Naive thymus-derived CD4-positive, alpha-beta T cell (primary cell): ENCODE measurements at regions of chr15 and their contacts with region 1.

Region 1: GRCh38 chr15:50119063-50120040 is at the start of gene ATP8B4:
- DNase-seq: no peak
- ATAC-seq: no peak
- H3K4me3 ChIP-seq: no peak within 1 kb of the TSS
- H3K4me3 Mint-ChIP-seq: peak within 1 kb of the TSS in 2 of 10 donors; percentile 73 to 82
- H3K27ac ChIP-seq: no peak within 1 kb of the TSS
- H3K27ac Mint-ChIP-seq: peak within 1 kb of the TSS in 1 of 9 donors; percentile 82
- H3K4me1 ChIP-seq: no peaks in the 10 kb centered on the region
- H3K4me1 Mint-ChIP-seq: peaks cover 0 to 36% (median 7%) of the 10 kb centered on the region in 7 donors
- H3K27me3 ChIP-seq: no peaks in the 10 kb centered on the region
- H3K27me3 Mint-ChIP-seq: peaks cover 0 to 17% (median 14%) of the 10 kb centered on the region in 5 donors
- total RNA-seq, gene ATP8B4: 0.92 to 24.3 (median 5.0) TPM

Region 2: GRCh38 chr15:49558924-49559323 is 560.4 kb before region 1 on chr15:
- CTCF ChIA-PET with region 1: no interaction called
- POLR2A ChIA-PET with region 1: no interaction called
- intact Hi-C with region 1: no loop called
- DNase-seq: no peak
- ATAC-seq: no peak
- H3K4me3 ChIP-seq: no peak overlapping the region
- H3K4me3 Mint-ChIP-seq: no peak overlapping the region
- H3K27ac ChIP-seq: no peak overlapping the region
- H3K27ac Mint-ChIP-seq: no peak overlapping the region
- H3K4me1 ChIP-seq: no peaks in the 10 kb centered on the region
- H3K4me1 Mint-ChIP-seq: no peaks in the 10 kb centered on the region
- H3K27me3 ChIP-seq: no peaks in the 10 kb centered on the region
- H3K27me3 Mint-ChIP-seq: no peaks in the 10 kb centered on the region

Region 3: GRCh38 chr15:50077651-50078050 is 41.7 kb before region 1 on chr15:
- CTCF ChIA-PET with region 1: no interaction called
- POLR2A ChIA-PET with region 1: no interaction called
- intact Hi-C with region 1: no loop called
- DNase-seq: no peak
- ATAC-seq: no peak
- H3K4me3 ChIP-seq: no peak overlapping the region
- H3K4me3 Mint-ChIP-seq: no peak overlapping the region
- H3K27ac ChIP-seq: no peak overlapping the region
- H3K27ac Mint-ChIP-seq: no peak overlapping the region
- H3K4me1 ChIP-seq: no peaks in the 10 kb centered on the region
- H3K4me1 Mint-ChIP-seq: peaks cover 0 to 15% (median 0%) of the 10 kb centered on the region in 7 donors
- H3K27me3 ChIP-seq: no peaks in the 10 kb centered on the region
- H3K27me3 Mint-ChIP-seq: peaks cover 0 to 7% (median 0%) of the 10 kb centered on the region in 5 donors

Region 4: DNA sequence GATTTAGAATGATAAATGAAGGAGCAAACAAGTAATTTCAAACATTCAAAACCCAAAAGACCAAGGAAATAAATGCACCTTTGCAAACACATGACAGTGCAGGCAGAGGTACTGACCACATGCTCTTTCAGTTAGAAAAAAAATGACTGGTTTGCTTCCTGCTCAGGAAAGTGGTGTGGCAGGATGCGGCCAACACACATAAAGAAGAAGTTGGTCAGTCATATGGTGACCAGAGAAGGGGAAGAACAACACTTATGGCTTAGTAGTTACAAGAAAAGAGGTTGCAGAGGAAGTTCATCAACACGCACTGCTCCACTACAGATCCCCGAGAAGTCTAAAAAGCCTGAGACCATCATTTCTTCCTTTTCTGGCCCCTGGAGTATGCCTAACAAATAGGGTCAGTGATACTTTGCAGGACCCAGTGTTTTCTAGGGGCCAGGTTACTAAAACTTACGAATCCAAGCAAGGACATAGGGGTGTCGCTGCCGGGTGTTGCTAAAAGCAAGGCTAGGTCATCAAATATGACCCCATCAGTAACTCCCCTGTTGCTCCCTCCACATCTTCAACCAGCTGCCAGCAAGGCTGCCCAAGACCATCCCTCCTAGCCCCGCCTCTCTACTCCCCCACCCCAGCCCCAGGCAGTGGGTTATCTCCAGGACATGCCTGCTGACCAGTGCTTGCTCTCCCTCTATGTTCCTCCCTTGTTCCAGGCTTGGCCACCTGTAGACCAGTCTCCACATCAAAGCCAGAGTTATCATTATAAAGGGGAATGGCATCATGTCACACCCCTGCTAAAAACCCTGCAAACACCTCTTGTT is 11.6 kb before region 1 on chr15:
- CTCF ChIA-PET with region 1: no interaction called
- POLR2A ChIA-PET with region 1: no interaction called
- intact Hi-C with region 1: loop called in 1 of 2 experiments (anchors 1 kb)
- DNase-seq: peak in 1 of 9 donors; percentile 42
- ATAC-seq: peak; percentile 90
- H3K4me3 ChIP-seq: no peak overlapping the region
- H3K4me3 Mint-ChIP-seq: peak overlapping the region in 2 of 10 donors; percentile 33 to 80
- H3K27ac ChIP-seq: no peak overlapping the region
- H3K27ac Mint-ChIP-seq: peak overlapping the region in 2 of 9 donors; percentile 15 to 96
- H3K4me1 ChIP-seq: peaks cover 4 to 19% of the 10 kb centered on the region in 2 donors
- H3K4me1 Mint-ChIP-seq: peaks cover 21 to 73% (median 35%) of the 10 kb centered on the region in 7 donors
- H3K27me3 ChIP-seq: no peaks in the 10 kb centered on the region
- H3K27me3 Mint-ChIP-seq: peaks cover 0 to 22% (median 0%) of the 10 kb centered on the region in 5 donors